Activated naive CD8-positive, alpha-beta T cell treated with anti-CD3 and anti-CD28 coated beads, Interleukin-2, amount 10 ng/mL, durations not matched to agents 7 days and 5 days (primary cell): ENCODE measurements at regions of chr5 and their contacts with region 1.

Region 1: GRCh38 chr5:157253547-157253946 is 12.4 kb upstream of the CYFIP2 start:
- DNase-seq: no peak
- ATAC-seq: no peak
- H3K4me3 Mint-ChIP-seq: peak overlapping the region; percentile 60
- H3K27ac Mint-ChIP-seq: peak overlapping the region; percentile 88
- H3K4me1 Mint-ChIP-seq: peaks cover 87% of the 10 kb centered on the region
- H3K27me3 Mint-ChIP-seq: no peaks in the 10 kb centered on the region

Region 2: DNA sequence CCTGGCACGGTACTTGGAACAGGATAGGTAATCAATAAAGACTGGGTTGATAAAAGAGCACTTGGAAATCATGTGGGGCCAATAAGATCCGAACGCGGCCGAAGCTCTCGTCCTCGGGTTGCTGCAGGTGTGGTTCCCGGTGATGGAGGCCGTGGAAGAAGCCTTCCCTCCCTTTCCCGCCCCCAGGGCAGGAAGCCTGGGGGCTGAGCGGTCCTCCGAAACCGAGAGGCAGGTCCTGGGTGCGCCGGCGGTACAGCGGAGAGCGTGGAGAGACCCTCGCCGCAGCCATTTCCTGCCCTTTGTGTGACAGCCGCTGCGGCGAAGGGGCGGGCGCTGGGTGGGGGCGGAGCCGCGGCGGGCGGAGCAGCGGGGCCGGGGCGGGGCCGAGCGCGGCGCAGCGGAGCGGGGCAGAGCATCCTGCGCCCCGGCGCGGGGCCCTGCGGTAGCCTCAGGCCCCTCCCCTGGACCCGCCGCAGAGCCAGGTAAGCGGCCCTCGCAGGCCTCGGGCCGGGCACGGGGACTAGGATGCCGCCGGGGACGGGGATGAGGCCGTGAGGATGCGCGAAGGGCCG is 12.3 kb after region 1 on chr5 and contains the start of gene CYFIP2:
- POLR2A ChIA-PET with region 1: interaction called, 68 read pairs
- DNase-seq: peak; percentile 91
- ATAC-seq: peak; percentile 80
- H3K4me3 Mint-ChIP-seq: peak within 1 kb of the TSS; percentile 93
- H3K27ac Mint-ChIP-seq: peak within 1 kb of the TSS; percentile 95
- H3K4me1 Mint-ChIP-seq: peaks cover 66% of the 10 kb centered on the region
- H3K27me3 Mint-ChIP-seq: no peaks in the 10 kb centered on the region
- total RNA-seq, gene CYFIP2: 458 to 480 TPM